Activated CD4-positive, alpha-beta T cell treated with anti-CD3 and anti-CD28 coated beads, Interleukin-2, amount 10 ng/mL, durations not matched to agents 24 days and 14 days (primary cell): ENCODE measurements at regions of chr13 and their contacts with region 1.

Region 1: GRCh38 chr13:42574435-42575311 is 721 bp downstream of the TNFSF11 start:
- DNase-seq: peak; percentile 72
- H3K4me3 Mint-ChIP-seq: peak overlapping the region; percentile 82
- H3K27ac Mint-ChIP-seq: peak overlapping the region; percentile 27
- H3K4me1 Mint-ChIP-seq: peaks cover 22% of the 10 kb centered on the region
- H3K27me3 Mint-ChIP-seq: peaks cover 54% of the 10 kb centered on the region

Region 2: DNA sequence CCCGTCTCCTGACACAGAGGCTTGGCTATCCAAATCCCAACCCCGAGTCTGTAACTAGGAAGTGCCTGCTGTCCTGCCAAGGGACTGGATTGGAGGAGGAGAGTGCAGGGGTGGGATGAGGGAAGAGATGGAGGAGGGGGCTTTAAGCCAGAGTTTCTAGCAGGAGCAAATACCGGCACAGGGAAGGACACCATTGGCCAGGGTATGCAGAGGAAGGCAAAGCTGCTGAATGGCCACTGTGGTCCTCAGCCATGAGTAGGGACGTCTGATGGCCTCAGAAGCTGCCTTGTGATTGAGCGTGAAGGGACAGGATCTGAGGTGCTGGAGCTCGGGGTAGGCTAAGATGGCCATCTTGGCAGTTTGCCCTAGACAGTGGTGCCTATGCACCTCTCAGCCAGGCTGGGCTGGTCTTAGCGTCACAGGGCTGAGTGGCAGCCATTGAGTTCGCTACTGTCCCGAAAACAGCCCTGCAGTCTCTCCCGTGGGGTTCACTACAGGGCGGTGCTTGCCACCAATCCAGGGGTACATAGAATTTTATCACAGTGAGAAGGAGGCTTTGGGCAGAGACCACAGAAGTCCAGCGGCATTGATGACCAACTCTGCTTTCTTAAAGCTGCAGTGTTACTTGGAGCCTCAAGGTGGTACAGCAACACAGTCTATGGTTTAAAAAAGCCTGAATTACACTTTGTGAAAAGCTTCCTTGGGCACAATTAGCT is 240.9 kb before region 1 on chr13:
- intact Hi-C with region 1: loop called (anchors 5 kb)
- DNase-seq: peak; percentile 66
- H3K4me3 Mint-ChIP-seq: no peak overlapping the region
- H3K27ac Mint-ChIP-seq: peak overlapping the region; percentile 76
- H3K4me1 Mint-ChIP-seq: peaks cover 35% of the 10 kb centered on the region
- H3K27me3 Mint-ChIP-seq: no peaks in the 10 kb centered on the region

Region 3: GRCh38 chr13:42354241-42355091 is 220.2 kb before region 1 on chr13:
- intact Hi-C with region 1: loop called (anchors 1 kb)
- DNase-seq: peak; percentile 80
- H3K4me3 Mint-ChIP-seq: peak overlapping the region; percentile 77
- H3K27ac Mint-ChIP-seq: peak overlapping the region; percentile 99
- H3K4me1 Mint-ChIP-seq: peaks cover 54% of the 10 kb centered on the region
- H3K27me3 Mint-ChIP-seq: no peaks in the 10 kb centered on the region

Region 4: GRCh38 chr13:42392716-42393572 is 181.7 kb before region 1 on chr13:
- intact Hi-C with region 1: loop called (anchors 2 kb)
- DNase-seq: peak; percentile 86
- H3K4me3 Mint-ChIP-seq: peak overlapping the region; percentile 91
- H3K27ac Mint-ChIP-seq: peak overlapping the region; percentile 97
- H3K4me1 Mint-ChIP-seq: peaks cover 76% of the 10 kb centered on the region
- H3K27me3 Mint-ChIP-seq: no peaks in the 10 kb centered on the region

Region 5: GRCh38 chr13:42405665-42406390 is 168.8 kb before region 1 on chr13:
- intact Hi-C with region 1: loop called (anchors 5 kb)
- DNase-seq: peak; percentile 81
- H3K4me3 Mint-ChIP-seq: peak overlapping the region; percentile 51
- H3K27ac Mint-ChIP-seq: peak overlapping the region; percentile 95
- H3K4me1 Mint-ChIP-seq: peaks cover 58% of the 10 kb centered on the region
- H3K27me3 Mint-ChIP-seq: no peaks in the 10 kb centered on the region

Region 6: DNA sequence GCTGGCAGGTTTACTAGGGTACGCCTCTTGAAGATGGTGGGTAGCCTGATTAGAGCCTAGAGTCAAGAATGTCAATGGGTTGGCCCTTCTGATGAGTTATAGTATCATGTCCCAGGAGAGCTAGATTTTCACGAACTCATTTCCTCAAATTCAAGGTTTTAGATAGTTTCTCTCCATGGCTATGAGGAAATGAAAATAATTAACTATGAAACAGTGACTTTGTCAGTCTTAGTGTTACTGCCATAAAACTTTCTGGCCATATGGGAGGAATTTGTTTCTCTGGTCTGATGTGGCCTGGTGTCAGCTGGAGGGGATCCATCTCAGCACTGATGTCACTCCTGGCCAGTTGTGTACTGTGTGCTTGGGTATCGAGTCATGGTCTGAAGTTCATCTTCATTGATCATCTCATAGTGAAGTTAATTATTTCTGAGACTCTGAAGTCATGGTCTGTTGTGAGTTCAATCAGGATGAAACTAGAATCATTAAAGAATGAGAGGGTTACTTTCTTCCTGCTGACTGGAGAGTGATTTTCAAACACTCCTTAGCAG is 50.1 kb before region 1 on chr13:
- intact Hi-C with region 1: no loop called
- DNase-seq: no peak
- H3K4me3 Mint-ChIP-seq: no peak overlapping the region
- H3K27ac Mint-ChIP-seq: no peak overlapping the region
- H3K4me1 Mint-ChIP-seq: no peaks in the 10 kb centered on the region
- H3K27me3 Mint-ChIP-seq: no peaks in the 10 kb centered on the region

Region 7: GRCh38 chr13:42600943-42601342 is 26.3 kb after region 1 on chr13:
- intact Hi-C with region 1: loop called (anchors 1 kb)
- DNase-seq: no peak
- H3K4me3 Mint-ChIP-seq: no peak overlapping the region
- H3K27ac Mint-ChIP-seq: peak overlapping the region; percentile 76
- H3K4me1 Mint-ChIP-seq: peaks cover 7% of the 10 kb centered on the region
- H3K27me3 Mint-ChIP-seq: peaks cover 2% of the 10 kb centered on the region

Region 8: DNA sequence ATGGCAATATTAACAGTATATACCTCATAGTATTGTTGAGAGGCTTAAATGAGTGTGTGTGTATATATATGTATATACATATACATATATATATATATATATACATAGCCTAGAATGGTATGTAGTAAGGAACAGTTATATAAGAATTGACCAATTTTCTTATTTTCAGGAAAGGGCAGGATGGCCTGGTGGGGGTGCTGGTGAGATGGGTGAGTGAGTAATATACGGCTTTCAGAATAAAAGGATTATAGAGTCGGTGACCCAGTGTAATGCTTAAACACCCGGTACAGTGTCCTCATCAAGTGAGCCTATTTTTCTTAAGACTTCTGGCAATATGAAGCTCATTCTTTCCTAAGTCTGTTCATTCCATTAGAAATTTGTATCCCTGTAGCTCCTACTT is 195.0 kb after region 1 on chr13:
- intact Hi-C with region 1: no loop called
- DNase-seq: no peak
- H3K4me3 Mint-ChIP-seq: no peak overlapping the region
- H3K27ac Mint-ChIP-seq: no peak overlapping the region
- H3K4me1 Mint-ChIP-seq: no peaks in the 10 kb centered on the region
- H3K27me3 Mint-ChIP-seq: peaks cover 31% of the 10 kb centered on the region